ENCODE measurements at regions of chr14 and their contacts with region 1.

Region 1: GRCh38 chr14:39232554-39233415 is 930 bp upstream of the MIA2 start:
- DNase-seq: no peak
- ATAC-seq: peak; percentile 10
- H3K4me3 Mint-ChIP-seq: peak overlapping the region; percentile 47
- H3K27ac Mint-ChIP-seq: peak overlapping the region; percentile 83
- H3K4me1 Mint-ChIP-seq: peaks cover 57% of the 10 kb centered on the region
- H3K27me3 Mint-ChIP-seq: no peaks in the 10 kb centered on the region

Region 2: DNA sequence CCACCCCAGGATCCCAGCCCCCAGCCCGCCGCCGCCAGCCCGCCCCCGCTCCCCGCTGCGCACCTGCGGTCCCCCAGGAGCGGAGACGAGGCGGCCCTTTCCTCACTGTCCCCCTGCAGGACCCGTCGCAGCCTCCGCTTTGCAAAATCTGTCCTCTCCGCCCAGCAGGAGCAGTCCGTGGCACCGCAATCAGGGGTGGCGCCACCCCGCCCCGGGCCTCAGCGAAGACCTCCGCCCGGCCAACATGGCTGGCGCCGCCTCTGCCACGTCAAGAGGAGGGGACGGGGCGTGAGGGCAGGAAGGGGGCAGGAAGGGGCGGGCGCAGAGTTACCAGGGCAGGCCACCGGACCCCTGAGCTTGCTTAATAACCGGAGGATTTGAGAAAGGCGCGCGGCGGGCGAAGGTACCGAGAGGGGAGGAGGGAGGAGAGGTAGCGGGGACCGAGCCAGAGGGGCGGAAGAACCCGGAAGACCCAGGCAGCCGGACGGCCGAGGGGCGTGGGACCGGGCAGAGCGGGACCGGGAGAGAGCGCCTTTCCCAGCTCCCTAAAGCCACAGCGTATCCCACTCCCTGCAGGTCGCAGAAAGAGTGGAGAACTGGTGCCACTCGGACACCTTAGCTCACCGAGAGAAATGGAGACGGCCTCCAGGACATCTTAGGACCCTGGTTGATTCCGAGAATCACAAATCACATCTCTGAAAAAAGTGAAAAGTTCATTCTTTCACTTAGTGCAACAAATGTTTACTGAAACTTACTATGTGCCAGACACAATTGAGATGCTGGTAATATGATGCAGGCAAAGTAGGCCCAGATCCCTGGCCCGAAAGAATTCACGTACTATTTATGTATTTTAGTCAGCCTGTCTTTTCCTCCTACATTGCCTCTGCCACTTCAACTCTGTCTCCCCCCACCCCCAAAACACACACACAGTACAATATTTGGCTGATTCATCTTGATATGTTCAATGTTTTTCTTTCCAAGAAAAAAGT is 129.5 kb before region 1 on chr14 and contains the start of gene SEC23A:
- CTCF ChIA-PET with region 1: interaction called, 13 read pairs
- POLR2A ChIA-PET with region 1: interaction called, 8 read pairs
- DNase-seq: peak; percentile 88
- ATAC-seq: peak; percentile 95
- H3K4me3 Mint-ChIP-seq: peak within 1 kb of the TSS; percentile 96
- H3K27ac Mint-ChIP-seq: peak within 1 kb of the TSS; percentile 97
- H3K4me1 Mint-ChIP-seq: peaks cover 50% of the 10 kb centered on the region
- H3K27me3 Mint-ChIP-seq: no peaks in the 10 kb centered on the region
- total RNA-seq, gene SEC23A: 48.2 to 50.2 TPM

Region 3: GRCh38 chr14:39174560-39175444 is 58.0 kb before region 1 on chr14 and contains the start of gene PNN:
- CTCF ChIA-PET with region 1: interaction called, 5 read pairs
- POLR2A ChIA-PET with region 1: interaction called, 15 read pairs
- DNase-seq: peak; percentile 99
- ATAC-seq: peak; percentile 92
- H3K4me3 Mint-ChIP-seq: peak within 1 kb of the TSS; percentile 98
- H3K27ac Mint-ChIP-seq: peak within 1 kb of the TSS; percentile 99
- H3K4me1 Mint-ChIP-seq: peaks cover 45% of the 10 kb centered on the region
- H3K27me3 Mint-ChIP-seq: no peaks in the 10 kb centered on the region
- total RNA-seq, gene PNN: 94.1 to 103 TPM

Region 4: DNA sequence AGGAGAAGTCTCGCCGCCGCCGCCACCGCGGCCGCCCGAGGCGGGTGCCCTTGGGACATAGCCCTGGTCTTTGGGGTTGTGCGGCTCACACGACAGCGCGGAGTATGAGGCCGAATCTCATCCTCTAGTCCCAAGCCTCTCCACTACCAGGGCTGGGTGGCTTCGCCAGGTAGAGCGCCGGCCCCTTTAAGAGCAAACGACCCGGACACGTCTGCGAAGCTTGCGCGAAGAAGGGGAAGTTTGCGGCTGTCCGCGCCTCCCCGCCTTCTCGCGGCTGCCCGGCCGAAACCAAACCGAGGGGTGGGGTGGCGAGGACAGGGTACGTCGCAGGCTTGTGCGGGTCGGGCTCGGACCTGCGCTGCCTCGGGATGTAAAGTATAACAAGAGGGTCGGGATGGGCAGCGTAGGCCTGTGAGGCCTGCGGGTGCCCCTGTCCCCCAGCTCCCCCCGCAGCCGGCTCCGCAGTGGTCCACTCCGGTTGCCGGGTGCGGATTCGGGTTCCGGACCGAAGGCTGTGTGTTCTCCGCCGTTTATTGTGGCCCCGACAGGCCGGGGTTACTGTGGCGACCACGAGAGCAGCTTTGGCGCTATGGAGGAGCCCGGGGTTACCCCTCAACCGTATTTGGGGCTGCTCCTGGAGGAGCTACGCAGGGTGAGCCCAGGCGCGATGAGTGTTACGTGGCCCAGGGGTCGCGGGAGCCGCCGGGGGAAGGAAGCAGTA is 34.2 kb after region 1 on chr14:
- CTCF ChIA-PET with region 1: interaction called, 17 read pairs
- POLR2A ChIA-PET with region 1: interaction called, 6 read pairs
- DNase-seq: peak; percentile 83
- ATAC-seq: peak; percentile 86
- H3K4me3 Mint-ChIP-seq: peak overlapping the region; percentile 93
- H3K27ac Mint-ChIP-seq: peak overlapping the region; percentile 97
- H3K4me1 Mint-ChIP-seq: peaks cover 54% of the 10 kb centered on the region
- H3K27me3 Mint-ChIP-seq: no peaks in the 10 kb centered on the region

Region 5: GRCh38 chr14:39383026-39383660 is 150.4 kb after region 1 on chr14:
- CTCF ChIA-PET with region 1: interaction called, 15 read pairs
- POLR2A ChIA-PET with region 1: no interaction called
- DNase-seq: no peak
- ATAC-seq: peak; percentile 61
- H3K4me3 Mint-ChIP-seq: no peak overlapping the region
- H3K27ac Mint-ChIP-seq: no peak overlapping the region
- H3K4me1 Mint-ChIP-seq: peaks cover 25% of the 10 kb centered on the region
- H3K27me3 Mint-ChIP-seq: no peaks in the 10 kb centered on the region

Region 6: GRCh38 chr14:39432179-39432618 is 199.4 kb after region 1 on chr14 and contains the start of gene FBXO33:
- CTCF ChIA-PET with region 1: interaction called, 46 read pairs
- POLR2A ChIA-PET with region 1: interaction called, 42 read pairs
- DNase-seq: peak; percentile 97
- ATAC-seq: peak; percentile 84
- H3K4me3 Mint-ChIP-seq: peak within 1 kb of the TSS; percentile 97
- H3K27ac Mint-ChIP-seq: peak within 1 kb of the TSS; percentile 100
- H3K4me1 Mint-ChIP-seq: peaks cover 40% of the 10 kb centered on the region
- H3K27me3 Mint-ChIP-seq: no peaks in the 10 kb centered on the region
- total RNA-seq, gene FBXO33: 18.7 to 19.0 TPM

Region 7: DNA sequence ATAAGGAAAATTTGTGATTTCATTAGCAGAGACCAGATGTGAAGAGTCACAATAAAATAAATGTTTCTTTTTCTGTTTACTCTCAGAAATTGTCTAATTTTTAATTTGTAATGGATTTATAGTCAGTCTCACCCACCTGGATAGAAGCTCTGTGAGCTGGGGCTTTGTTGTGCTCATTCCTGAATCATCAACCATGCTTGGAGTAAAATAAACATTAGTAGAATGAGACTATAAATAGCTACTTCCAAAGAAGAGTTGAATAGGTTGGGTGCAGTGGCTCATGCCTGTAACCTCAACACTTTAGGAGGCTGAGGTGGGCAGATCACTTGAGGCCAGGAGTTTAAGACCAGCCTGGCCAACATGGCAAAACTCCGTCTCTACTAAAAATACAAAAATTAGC is 384.8 kb after region 1 on chr14:
- CTCF ChIA-PET with region 1: no interaction called
- POLR2A ChIA-PET with region 1: no interaction called
- DNase-seq: no peak
- ATAC-seq: no peak
- H3K4me3 Mint-ChIP-seq: no peak overlapping the region
- H3K27ac Mint-ChIP-seq: no peak overlapping the region
- H3K4me1 Mint-ChIP-seq: peaks cover 2% of the 10 kb centered on the region
- H3K27me3 Mint-ChIP-seq: no peaks in the 10 kb centered on the region